Naive thymus-derived CD4-positive, alpha-beta T cell (primary cell): ENCODE measurements at regions of chr1 and their contacts with region 1.

Region 1: GRCh38 chr1:145963995-145964901 is at the starts of genes ANKRD34A and POLR3GL:
- DNase-seq: peak; percentile 71 to 94 (median 89)
- ATAC-seq: peak; percentile 96
- H3K4me3 ChIP-seq: peak within 1 kb of the TSS; percentile 87
- H3K4me3 Mint-ChIP-seq: peak within 1 kb of the TSS; percentile 88 to 99 (median 96)
- H3K27ac ChIP-seq: peak within 1 kb of the TSS; percentile 84
- H3K27ac Mint-ChIP-seq: peak within 1 kb of the TSS; percentile 87 to 98 (median 92)
- H3K4me1 ChIP-seq: peaks cover 14 to 31% of the 10 kb centered on the region in 2 donors
- H3K4me1 Mint-ChIP-seq: peaks cover 38 to 62% (median 57%) of the 10 kb centered on the region in 7 donors
- H3K27me3 ChIP-seq: no peaks in the 10 kb centered on the region
- H3K27me3 Mint-ChIP-seq: peaks cover 0 to 4% (median 0%) of the 10 kb centered on the region in 5 donors
- total RNA-seq, gene ANKRD34A: 0.54 to 1.5 (median 1.2) TPM
- total RNA-seq, gene POLR3GL: 20.7 to 37.5 (median 25.5) TPM

Region 2: GRCh38 chr1:145782166-145783099 is 181.8 kb before region 1 on chr1:
- CTCF ChIA-PET with region 1: no interaction called
- POLR2A ChIA-PET with region 1: no interaction called
- intact Hi-C with region 1: no loop called
- DNase-seq: no peak
- ATAC-seq: no peak
- H3K4me3 ChIP-seq: no peak overlapping the region
- H3K4me3 Mint-ChIP-seq: no peak overlapping the region
- H3K27ac ChIP-seq: no peak overlapping the region
- H3K27ac Mint-ChIP-seq: no peak overlapping the region
- H3K4me1 ChIP-seq: peaks cover 0 to 5% of the 10 kb centered on the region in 2 donors
- H3K4me1 Mint-ChIP-seq: peaks cover 14 to 27% (median 24%) of the 10 kb centered on the region in 7 donors
- H3K27me3 ChIP-seq: no peaks in the 10 kb centered on the region
- H3K27me3 Mint-ChIP-seq: no peaks in the 10 kb centered on the region

Region 3: DNA sequence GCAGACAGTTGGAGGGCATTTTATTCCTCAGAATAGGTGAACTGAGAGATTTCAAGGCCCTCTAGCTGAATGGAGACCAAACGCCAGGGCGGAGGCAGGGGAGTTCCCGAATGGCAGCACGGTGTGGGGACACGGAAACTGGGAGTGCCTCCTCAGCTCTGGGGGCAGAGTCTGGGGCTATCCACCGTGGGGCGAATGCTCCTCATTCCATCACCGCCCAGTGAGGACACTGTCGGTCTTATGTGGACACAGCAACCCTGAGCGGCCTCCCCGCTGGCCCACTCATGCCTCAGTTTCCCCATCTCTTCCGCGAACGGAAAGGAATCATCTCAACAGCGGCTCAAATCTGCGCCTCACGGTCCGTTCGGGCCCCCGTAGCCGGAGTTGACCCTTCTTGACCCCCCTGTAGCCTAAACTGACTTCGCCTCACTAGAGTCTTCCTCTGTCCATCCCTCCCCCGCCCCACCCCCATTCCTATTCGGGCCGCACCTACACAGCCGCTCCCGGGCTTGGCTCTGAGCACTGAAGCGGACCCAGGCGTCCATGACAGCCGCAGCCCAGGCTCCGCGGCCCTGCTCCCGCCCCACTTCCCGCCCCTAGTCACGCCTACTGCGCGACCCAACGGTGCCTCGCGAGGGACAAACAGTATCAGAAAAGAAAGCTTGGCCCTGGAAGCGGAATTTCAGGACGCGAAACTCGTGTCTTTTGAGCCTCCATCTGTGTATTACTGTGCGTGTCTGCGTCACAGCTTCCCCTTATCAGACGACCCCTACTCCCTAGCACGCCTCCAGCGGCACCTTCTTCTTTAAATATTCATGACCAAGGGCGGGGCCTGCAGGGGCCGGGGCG is 45.9 kb before region 1 on chr1 and contains the start of gene PEX11B:
- CTCF ChIA-PET with region 1: interaction called, 4 read pairs
- POLR2A ChIA-PET with region 1: interaction called, 50 read pairs
- intact Hi-C with region 1: loop called in 1 of 2 experiments (anchors 1 kb)
- DNase-seq: peak; percentile 80 to 95 (median 93)
- ATAC-seq: peak; percentile 94
- H3K4me3 ChIP-seq: peak within 1 kb of the TSS; percentile 82
- H3K4me3 Mint-ChIP-seq: peak within 1 kb of the TSS; percentile 92 to 98 (median 96)
- H3K27ac ChIP-seq: peak within 1 kb of the TSS; percentile 83
- H3K27ac Mint-ChIP-seq: peak within 1 kb of the TSS; percentile 93 to 98 (median 96)
- H3K4me1 ChIP-seq: peaks cover 21 to 23% of the 10 kb centered on the region in 2 donors
- H3K4me1 Mint-ChIP-seq: peaks cover 27 to 75% (median 61%) of the 10 kb centered on the region in 7 donors
- H3K27me3 ChIP-seq: no peaks in the 10 kb centered on the region
- H3K27me3 Mint-ChIP-seq: no peaks in the 10 kb centered on the region
- total RNA-seq, gene PEX11B: 16.4 to 40.4 (median 37.7) TPM

Region 4: DNA sequence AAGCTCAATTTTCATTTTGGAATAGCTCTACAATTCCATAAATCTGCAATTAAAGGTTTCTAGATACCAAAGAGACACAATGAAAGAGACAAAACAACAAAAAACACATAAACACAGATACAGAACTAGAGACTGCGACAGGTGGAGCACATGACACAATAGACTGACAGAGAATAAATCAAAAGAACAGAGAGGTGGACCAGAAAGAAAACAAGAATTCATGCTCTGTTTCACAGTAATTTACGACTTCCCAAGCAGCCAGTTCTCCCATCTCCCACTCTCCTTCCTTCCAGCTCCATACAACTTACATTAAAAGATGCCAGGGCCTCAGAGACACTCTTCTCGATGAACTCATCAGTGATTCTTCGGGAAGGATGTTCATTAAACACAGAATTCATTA is 21.8 kb before region 1 on chr1:
- CTCF ChIA-PET with region 1: no interaction called
- POLR2A ChIA-PET with region 1: interaction called, 10 read pairs
- intact Hi-C with region 1: no loop called
- DNase-seq: no peak
- ATAC-seq: no peak
- H3K4me3 ChIP-seq: no peak overlapping the region
- H3K4me3 Mint-ChIP-seq: no peak overlapping the region
- H3K27ac ChIP-seq: no peak overlapping the region
- H3K27ac Mint-ChIP-seq: peak overlapping the region in 2 of 9 donors; percentile 41 to 73
- H3K4me1 ChIP-seq: no peaks in the 10 kb centered on the region
- H3K4me1 Mint-ChIP-seq: peaks cover 0 to 24% (median 13%) of the 10 kb centered on the region in 7 donors
- H3K27me3 ChIP-seq: no peaks in the 10 kb centered on the region
- H3K27me3 Mint-ChIP-seq: no peaks in the 10 kb centered on the region

Region 5: GRCh38 chr1:145996433-145997015 is 32.3 kb after region 1 on chr1 and contains the start of gene TXNIP:
- CTCF ChIA-PET with region 1: interaction called, 3 read pairs
- POLR2A ChIA-PET with region 1: interaction called, 164 read pairs
- intact Hi-C with region 1: loop called in 1 of 2 experiments (anchors 5 kb)
- DNase-seq: peak; percentile 66 to 97 (median 94)
- ATAC-seq: peak; percentile 92
- H3K4me3 ChIP-seq: peak within 1 kb of the TSS; percentile 97
- H3K4me3 Mint-ChIP-seq: peak within 1 kb of the TSS; percentile 89 to 99 (median 98)
- H3K27ac ChIP-seq: peak within 1 kb of the TSS; percentile 91
- H3K27ac Mint-ChIP-seq: peak within 1 kb of the TSS; percentile 94 to 99 (median 97)
- H3K4me1 ChIP-seq: peaks cover 41 to 48% of the 10 kb centered on the region in 2 donors
- H3K4me1 Mint-ChIP-seq: peaks cover 43 to 72% (median 54%) of the 10 kb centered on the region in 7 donors
- H3K27me3 ChIP-seq: no peaks in the 10 kb centered on the region
- H3K27me3 Mint-ChIP-seq: peaks cover 0 to 3% (median 0%) of the 10 kb centered on the region in 5 donors
- total RNA-seq, gene TXNIP: 498 to 1,101 (median 659) TPM

Region 6: DNA sequence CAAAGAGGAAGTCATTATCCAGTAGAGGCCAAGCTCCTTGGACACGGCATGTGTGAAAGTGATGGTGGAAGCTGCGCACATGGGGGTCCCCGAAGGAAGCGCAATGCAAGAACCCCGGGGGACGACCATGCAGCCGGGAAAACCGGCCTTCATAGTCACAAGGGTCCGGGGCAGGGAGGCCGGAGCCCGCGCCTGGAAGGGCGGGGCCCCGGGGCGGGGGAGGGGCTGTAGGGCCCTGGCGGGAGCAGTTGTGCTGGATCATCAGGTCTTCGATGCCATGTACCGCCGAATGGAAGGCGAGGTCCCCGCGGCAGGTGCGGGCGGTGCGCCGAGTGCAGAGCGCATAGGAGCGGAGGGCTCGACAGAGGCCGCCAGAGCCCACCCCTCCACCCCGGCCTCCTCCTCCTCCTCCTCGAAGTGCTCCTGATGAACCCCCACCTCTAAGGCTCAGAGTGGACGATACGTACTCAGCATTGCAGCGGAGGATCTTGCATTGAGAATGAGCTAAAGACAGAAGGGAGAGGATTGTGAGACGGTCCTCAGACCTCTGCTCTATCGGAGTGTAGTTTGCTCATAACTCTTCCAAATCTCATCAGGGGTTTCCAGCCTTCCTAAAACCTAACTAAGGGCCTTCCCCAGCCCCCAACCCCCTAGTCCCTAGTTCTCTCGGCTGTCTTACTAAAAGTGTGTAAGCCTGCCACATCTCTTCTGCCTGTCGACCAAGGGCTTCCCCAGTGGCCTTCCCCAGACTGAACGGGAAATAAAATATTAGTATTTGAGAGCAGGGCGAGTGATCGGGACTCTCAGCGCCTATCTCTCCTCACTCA is 55.2 kb after region 1 on chr1:
- CTCF ChIA-PET with region 1: no interaction called
- POLR2A ChIA-PET with region 1: interaction called, 11 read pairs
- intact Hi-C with region 1: no loop called
- DNase-seq: no peak
- ATAC-seq: peak; percentile 31
- H3K4me3 ChIP-seq: no peak overlapping the region
- H3K4me3 Mint-ChIP-seq: peak overlapping the region in 9 of 10 donors; percentile 5 to 63 (median 49)
- H3K27ac ChIP-seq: no peak overlapping the region
- H3K27ac Mint-ChIP-seq: peak overlapping the region in 2 of 9 donors; percentile 13 to 50
- H3K4me1 ChIP-seq: peaks cover 4 to 7% of the 10 kb centered on the region in 2 donors
- H3K4me1 Mint-ChIP-seq: peaks cover 0 to 13% (median 10%) of the 10 kb centered on the region in 7 donors
- H3K27me3 ChIP-seq: peaks cover 10 to 15% of the 10 kb centered on the region in 2 donors
- H3K27me3 Mint-ChIP-seq: peaks cover 38 to 80% (median 56%) of the 10 kb centered on the region in 5 donors